HEK293 (cell line): ENCODE measurements at regions of chr16 and their contacts with region 1.

Region 1: DNA sequence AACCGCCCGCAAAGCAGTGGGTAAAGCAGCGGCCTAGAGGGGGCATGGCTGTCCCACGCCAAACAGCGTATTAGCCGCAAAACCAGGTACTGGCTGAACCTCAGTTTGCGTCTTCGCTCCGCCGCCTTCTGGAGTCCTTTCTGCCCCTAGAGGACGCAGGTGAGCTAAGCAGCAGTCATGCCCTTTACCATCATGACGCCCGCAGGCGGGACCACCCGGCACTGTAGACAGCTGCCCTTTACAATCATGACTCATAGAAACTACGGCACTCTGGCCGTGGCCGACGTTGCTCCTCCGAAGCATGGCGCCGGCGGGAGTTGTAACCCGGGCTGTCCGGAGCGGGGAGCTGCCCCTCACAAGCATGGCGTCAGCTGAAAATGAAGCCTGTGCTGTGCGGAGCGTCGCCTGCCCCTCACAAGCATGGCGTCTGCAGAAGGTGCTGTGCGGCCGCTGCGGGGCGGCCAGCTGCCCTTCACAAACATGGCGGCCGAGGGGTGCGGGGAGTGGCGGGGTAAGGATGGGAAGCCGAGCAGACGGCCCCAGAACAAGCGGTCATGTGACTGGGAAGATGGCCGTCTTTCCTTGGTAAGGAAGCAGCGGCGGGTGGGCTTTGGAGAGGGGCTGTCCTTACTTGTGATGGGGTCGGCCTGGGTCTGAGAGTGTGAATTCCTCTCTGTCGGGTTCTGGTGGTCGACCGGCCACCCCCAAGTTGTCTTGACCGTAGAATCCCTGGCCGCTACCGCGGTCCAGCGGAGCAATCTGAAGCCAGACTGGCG is at the start of gene VPS35L:
- H3K4me3 ChIP-seq: peak within 1 kb of the TSS; percentile 86
- H3K27ac ChIP-seq: peak within 1 kb of the TSS; percentile 70
- H3K4me1 ChIP-seq: no peaks in the 10 kb centered on the region
- CTCF ChIP-seq: peak; percentile 92

Region 2: GRCh38 chr16:19523648-19524355 is 31.5 kb before region 1 on chr16 and contains the start of gene CCP110:
- CTCF ChIA-PET with region 1: interaction called, 9 read pairs
- POLR2A ChIA-PET with region 1: interaction called, 25 read pairs
- H3K4me3 ChIP-seq: peak within 1 kb of the TSS; percentile 95
- H3K27ac ChIP-seq: peak within 1 kb of the TSS; percentile 68; the same call in 1 of the 2 replicates
- H3K4me1 ChIP-seq: peaks cover 13% of the 10 kb centered on the region; the same call in 1 of the 2 replicates
- CTCF ChIP-seq: peak; percentile 20; the same call in 1 of the 2 replicates

Region 3: GRCh38 chr16:19542138-19542821 is 13.1 kb before region 1 on chr16:
- CTCF ChIA-PET with region 1: interaction called, 17 read pairs
- POLR2A ChIA-PET with region 1: interaction called, 6 read pairs
- H3K4me3 ChIP-seq: no peak overlapping the region
- H3K27ac ChIP-seq: 0 out of 2 replicates have a peak overlapping the region, but pooled peaks have one; percentile 4
- H3K4me1 ChIP-seq: no peaks in the 10 kb centered on the region
- CTCF ChIP-seq: no peak

Region 4: GRCh38 chr16:19659554-19659953 is 104.2 kb after region 1 on chr16:
- CTCF ChIA-PET with region 1: no interaction called
- POLR2A ChIA-PET with region 1: no interaction called
- H3K4me3 ChIP-seq: no peak overlapping the region
- H3K27ac ChIP-seq: no peak overlapping the region
- H3K4me1 ChIP-seq: no peaks in the 10 kb centered on the region
- CTCF ChIP-seq: no peak

Region 5: GRCh38 chr16:19672378-19672777 is 117.0 kb after region 1 on chr16:
- CTCF ChIA-PET with region 1: no interaction called
- POLR2A ChIA-PET with region 1: no interaction called
- H3K4me3 ChIP-seq: no peak overlapping the region
- H3K27ac ChIP-seq: no peak overlapping the region
- H3K4me1 ChIP-seq: no peaks in the 10 kb centered on the region
- CTCF ChIP-seq: no peak

Region 6: DNA sequence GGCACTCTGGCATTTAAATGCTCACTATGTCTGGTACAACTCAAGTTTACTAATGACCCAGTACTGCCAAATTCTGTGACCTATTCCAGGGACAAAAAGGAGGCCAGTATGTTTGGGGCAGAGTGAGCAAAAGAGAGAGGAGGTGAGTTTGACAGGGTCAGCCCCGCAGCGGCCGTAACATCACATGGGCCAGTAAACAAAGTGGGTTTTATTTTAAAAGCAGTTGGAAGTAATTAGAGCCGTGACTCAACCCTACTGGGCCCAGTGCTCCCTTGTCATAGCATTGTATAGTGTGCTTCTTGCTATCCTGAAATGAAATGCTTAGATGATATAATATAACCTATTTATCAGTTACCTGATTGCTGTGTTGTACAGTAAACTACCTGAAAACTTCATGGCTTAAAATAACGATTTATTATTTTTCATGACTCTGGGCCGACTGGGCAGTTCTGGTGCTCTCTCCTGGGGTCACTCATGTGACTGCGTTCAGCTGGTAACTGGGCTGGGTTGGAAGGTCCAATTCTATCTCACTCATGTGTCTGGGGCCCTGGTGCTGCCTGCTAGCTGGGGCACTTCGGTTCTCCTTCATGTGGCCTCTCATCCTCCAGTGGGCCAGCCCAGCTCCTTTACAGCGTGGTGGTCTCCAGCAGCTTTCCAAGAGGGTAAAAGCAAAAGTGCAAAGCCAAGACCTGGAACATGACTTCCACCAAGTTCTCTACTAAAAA is 190.1 kb after region 1 on chr16:
- CTCF ChIA-PET with region 1: no interaction called
- POLR2A ChIA-PET with region 1: no interaction called
- H3K4me3 ChIP-seq: no peak overlapping the region
- H3K27ac ChIP-seq: no peak overlapping the region
- H3K4me1 ChIP-seq: 0 out of 2 replicates have a peak, but pooled peaks cover 2% of the 10 kb centered on the region
- CTCF ChIP-seq: no peak